ENCODE measurements at regions of chr1 and their contacts with region 1.

Region 1: DNA sequence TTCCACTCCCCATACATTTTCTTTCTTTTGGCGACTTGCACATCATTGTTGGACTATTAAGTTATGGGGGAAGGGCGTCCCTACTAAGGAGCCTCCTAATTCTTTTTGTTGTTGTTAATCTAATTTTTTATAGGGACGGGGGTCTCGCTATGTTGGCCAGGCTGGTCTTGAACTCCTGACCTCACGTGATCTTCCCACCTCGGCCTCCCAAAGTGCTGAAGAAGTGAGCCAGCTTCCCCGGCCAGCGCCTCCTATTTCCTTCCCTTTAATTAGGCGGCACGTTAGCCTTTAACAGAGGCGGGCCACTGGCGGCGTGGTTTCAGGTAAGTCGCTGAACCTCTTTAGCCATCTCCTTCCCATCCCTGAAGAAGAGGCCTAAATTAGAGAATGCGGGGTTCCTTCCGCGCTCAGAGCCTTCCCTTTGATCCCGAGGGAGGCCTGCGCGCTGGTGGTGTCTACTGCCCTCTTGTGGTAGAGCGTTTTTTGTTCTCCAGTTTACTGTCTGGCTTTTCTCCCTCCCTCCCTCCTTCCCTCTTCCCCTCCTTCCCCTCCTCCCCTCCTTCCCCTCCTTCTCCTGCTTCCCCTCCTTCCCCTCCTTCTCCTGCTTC is 38.1 kb downstream of the TNFRSF9 start:
- DNase-seq: peak; percentile 34 to 38
- H3K4me3 ChIP-seq: no peak overlapping the region
- H3K27ac ChIP-seq: no peak overlapping the region
- H3K4me1 ChIP-seq: no peaks in the 10 kb centered on the region
- H3K27me3 ChIP-seq: no peaks in the 10 kb centered on the region
- CTCF ChIP-seq: peak; percentile 65

Region 2: DNA sequence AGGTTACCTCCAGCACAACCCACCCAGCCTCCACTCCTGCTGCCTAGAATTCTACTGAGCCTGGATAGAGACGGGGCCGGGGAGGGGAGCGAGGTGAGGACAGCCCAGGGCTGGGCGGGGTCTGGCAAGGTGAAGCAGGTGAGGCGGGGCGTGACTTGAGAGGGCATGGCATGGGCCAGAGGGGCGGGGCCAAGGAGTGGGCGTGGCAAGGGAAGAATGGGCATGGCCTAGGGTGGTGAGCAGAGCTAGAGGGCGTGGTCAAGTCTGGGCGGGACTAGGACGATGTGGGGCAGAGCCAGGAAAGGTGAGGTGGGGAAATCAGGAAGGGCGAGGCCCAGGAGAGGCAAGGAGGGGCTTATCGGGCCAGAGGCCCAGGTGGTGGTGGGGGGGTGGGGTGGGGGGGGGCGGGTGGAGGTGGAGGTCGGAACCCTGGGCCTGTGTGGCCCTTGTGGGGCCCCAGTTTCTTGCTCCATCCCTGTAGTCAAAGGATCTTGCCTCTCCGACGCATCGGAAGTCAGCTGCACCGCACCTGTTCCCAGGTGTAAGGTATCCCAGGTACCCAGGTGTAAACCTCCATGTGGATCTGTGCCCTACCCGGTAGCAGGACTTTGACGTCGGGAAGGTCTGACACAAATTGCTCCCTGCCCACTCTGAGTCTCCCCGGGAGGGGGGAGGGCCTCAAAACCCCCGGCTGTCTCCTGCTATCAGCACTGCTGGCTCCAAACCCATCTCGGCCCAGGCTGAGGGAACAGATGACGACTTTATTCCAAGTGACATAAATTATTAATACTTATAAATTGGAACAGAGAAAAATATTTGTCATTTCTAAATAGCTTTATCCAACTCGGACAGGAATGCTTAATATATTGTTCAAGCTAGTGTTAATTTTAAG is 16.8 kb before region 1 on chr1:
- CTCF ChIA-PET with region 1: interaction called, 15 read pairs
- POLR2A ChIA-PET with region 1: no interaction called
- intact Hi-C with region 1: no loop called
- DNase-seq: peak in 1 of 2 experiments; percentile 98
- H3K4me3 ChIP-seq: no peak overlapping the region
- H3K27ac ChIP-seq: no peak overlapping the region
- H3K4me1 ChIP-seq: no peaks in the 10 kb centered on the region
- H3K27me3 ChIP-seq: no peaks in the 10 kb centered on the region
- CTCF ChIP-seq: no peak